Motor neuron (in vitro differentiated cells): ENCODE measurements at regions of chr11 and their contacts with region 1.

Region 1: GRCh38 chr11:48034926-48035871 is 54.8 kb downstream of the PTPRJ start:
- ATAC-seq: peak in 1 of 8 experiments; percentile 71
- H3K4me3 ChIP-seq: no peak overlapping the region
- H3K27ac ChIP-seq: no peak overlapping the region
- H3K4me1 ChIP-seq: peaks cover 0 to 3% of the 10 kb centered on the region in 2 donors

Region 2: DNA sequence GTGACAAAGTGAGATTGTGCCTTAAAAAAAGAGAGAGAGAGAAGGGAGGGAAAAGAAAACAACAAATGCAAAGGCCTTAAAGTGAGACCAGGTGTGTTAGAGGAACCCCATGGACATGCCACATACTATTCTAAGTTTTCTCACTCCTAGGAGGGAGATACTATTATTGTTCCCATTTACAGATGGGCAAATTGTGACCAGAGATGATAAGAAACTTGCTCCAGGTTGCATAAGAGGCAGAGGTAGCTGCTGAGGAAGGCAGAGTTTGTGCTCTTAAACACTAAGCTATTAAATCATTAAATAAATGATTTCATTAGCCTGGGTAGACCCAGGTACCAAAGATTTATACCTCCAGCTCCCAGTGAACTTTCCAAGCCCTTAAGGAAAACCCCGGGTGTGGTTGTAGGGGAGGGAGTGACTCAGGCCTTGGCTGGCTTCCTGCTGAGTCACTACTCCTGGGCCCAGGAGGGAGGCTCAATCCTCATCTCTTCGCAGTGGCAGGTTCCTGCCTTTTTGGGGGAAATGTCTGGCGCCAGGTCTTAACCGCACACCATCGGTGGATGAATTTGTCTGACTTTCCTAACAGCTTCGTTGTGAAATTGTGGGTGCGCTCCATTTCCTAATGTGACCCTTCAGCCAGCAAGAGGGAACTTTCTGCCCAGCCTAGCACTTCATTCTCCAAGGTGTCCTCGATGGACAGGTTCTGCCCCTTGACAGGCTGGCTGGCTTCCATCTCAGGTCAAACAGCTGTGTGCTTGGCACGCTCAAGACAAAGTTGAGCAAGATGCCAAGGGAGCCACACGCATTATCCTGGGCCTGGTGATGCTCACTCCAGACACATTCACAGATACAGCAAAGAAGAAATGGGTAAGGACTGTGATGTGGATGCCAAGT is 88.3 kb before region 1 on chr11:
- in situ Hi-C with region 1: loop called in 1 of 9 experiments (anchors 25 kb)
- ATAC-seq: peak; percentile 38 to 98 (median 58)
- H3K4me3 ChIP-seq: no peak overlapping the region
- H3K27ac ChIP-seq: no peak overlapping the region
- H3K4me1 ChIP-seq: no peaks in the 10 kb centered on the region

Region 3: GRCh38 chr11:48216510-48216909 is 181.3 kb after region 1 on chr11 and contains the start of gene OR4B1:
- in situ Hi-C with region 1: no loop called
- ATAC-seq: no peak
- H3K4me3 ChIP-seq: no peak within 1 kb of the TSS
- H3K27ac ChIP-seq: no peak within 1 kb of the TSS
- H3K4me1 ChIP-seq: no peaks in the 10 kb centered on the region
- total RNA-seq, gene OR4B1: 0.21 to 0.66 TPM in 2 of 8 experiments, not detected in the others